ENCODE measurements at regions of chrX and their contacts with region 1.

Region 1: GRCh38 chrX:140087875-140088274 is 122.6 kb upstream of the CXorf66 start:
- DNase-seq: no peak
- ATAC-seq: no peak
- H3K4me3 ChIP-seq: no peak overlapping the region
- H3K4me3 Mint-ChIP-seq: no peak overlapping the region
- H3K27ac ChIP-seq: no peak overlapping the region
- H3K27ac Mint-ChIP-seq: no peak overlapping the region
- H3K4me1 ChIP-seq: peaks cover 8% of the 10 kb centered on the region in 2 donors
- H3K4me1 Mint-ChIP-seq: peaks cover 2% of the 10 kb centered on the region
- H3K27me3 ChIP-seq: peaks cover 0 to 11% (median 4%) of the 10 kb centered on the region in 4 experiments
- H3K27me3 Mint-ChIP-seq: peaks cover 8% of the 10 kb centered on the region
- CTCF ChIP-seq: no peak

Region 2: DNA sequence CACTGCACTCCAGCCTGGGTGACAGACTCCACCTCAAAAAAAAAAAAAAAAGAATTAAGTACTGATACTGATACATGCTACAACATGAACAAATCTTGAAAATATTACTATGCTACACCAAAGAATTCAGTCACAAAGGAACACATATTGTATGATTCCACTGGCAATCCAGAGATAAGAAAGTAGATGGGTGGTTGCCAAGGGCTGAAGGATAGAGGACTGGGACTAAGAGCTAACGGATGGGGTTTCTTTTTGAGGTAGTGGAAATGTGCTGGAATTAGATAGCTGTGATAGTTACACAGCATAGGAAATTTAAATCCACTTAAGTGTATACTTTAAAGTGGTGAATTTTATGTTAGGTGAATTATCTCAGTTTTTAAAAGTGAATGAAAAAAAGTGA is 167.6 kb before region 1 on chrX:
- CTCF ChIA-PET with region 1: no interaction called
- POLR2A ChIA-PET with region 1: no interaction called
- intact Hi-C with region 1: no loop called
- DNase-seq: no peak
- ATAC-seq: no peak
- H3K4me3 ChIP-seq: no peak overlapping the region
- H3K4me3 Mint-ChIP-seq: no peak overlapping the region
- H3K27ac ChIP-seq: no peak overlapping the region
- H3K27ac Mint-ChIP-seq: no peak overlapping the region
- H3K4me1 ChIP-seq: peaks cover 0 to 3% of the 10 kb centered on the region in 2 donors
- H3K4me1 Mint-ChIP-seq: peaks cover 27% of the 10 kb centered on the region
- H3K27me3 ChIP-seq: no peaks in the 10 kb centered on the region
- H3K27me3 Mint-ChIP-seq: no peaks in the 10 kb centered on the region
- CTCF ChIP-seq: no peak

Region 3: GRCh38 chrX:140123446-140123845 is 35.6 kb after region 1 on chrX:
- CTCF ChIA-PET with region 1: no interaction called
- POLR2A ChIA-PET with region 1: no interaction called
- intact Hi-C with region 1: loop called (anchors 5 kb)
- DNase-seq: no peak
- ATAC-seq: no peak
- H3K4me3 ChIP-seq: no peak overlapping the region
- H3K4me3 Mint-ChIP-seq: no peak overlapping the region
- H3K27ac ChIP-seq: no peak overlapping the region
- H3K27ac Mint-ChIP-seq: no peak overlapping the region
- H3K4me1 ChIP-seq: no peaks in the 10 kb centered on the region
- H3K4me1 Mint-ChIP-seq: no peaks in the 10 kb centered on the region
- H3K27me3 ChIP-seq: no peaks in the 10 kb centered on the region
- H3K27me3 Mint-ChIP-seq: no peaks in the 10 kb centered on the region
- CTCF ChIP-seq: no peak